ENCODE measurements at regions of chr13 and their contacts with region 1.

Region 1: DNA sequence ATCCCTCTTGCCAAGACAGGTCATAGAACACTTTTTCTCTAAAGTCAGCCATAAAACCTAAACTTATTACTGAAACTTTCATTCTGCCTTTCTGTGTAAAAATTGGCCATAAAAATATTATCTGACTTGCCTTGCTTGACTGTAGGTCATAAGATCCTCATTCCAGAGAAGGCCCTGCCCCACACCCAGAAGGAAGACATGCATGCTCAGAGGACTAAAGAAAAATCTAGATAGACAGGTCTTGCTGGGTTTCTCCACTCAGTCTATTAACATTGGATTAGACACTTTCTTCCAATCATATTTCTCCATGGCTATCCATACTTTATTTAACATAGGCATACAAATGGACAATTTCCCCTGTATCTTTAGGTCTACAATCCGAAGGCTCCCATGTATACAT is 1066.5 kb downstream of the SLITRK1 start:
- DNase-seq: no peak
- H3K4me3 ChIP-seq: no peak overlapping the region
- H3K27ac ChIP-seq: no peak overlapping the region
- H3K4me1 ChIP-seq: no peaks in the 10 kb centered on the region
- H3K27me3 ChIP-seq: no peaks in the 10 kb centered on the region
- CTCF ChIP-seq: no peak
- POLR2A ChIP-seq: no peak

Region 2: DNA sequence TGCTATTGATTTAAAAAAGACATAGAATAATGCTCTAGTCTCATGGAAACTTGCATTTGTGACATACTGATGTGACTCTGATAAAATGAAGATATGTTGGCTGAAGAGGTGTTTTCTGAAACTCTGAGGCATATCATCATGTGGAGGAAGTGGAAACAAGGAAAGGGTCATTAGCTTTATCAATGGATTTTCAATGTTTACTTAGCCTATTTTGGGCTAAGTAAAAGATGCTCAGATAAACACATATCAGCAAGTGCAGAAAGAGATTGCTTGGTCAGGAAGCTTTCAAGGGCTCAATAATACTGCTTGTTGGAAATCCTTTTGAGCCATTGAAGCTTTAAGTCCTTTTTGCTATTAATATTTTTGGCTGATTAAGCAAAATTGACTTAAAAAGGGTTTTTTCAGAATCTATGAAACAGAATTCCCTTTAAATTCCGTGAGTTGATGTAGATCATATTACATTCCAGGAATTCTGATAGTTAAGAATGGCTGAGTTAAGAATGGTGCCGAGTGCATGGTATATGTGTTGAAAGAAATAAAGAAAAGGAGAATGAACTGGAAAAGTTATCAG is 1522.1 kb before region 1 on chr13:
- intact Hi-C with region 1: loop called (anchors 5 kb)
- DNase-seq: no peak
- H3K4me3 ChIP-seq: no peak overlapping the region
- H3K27ac ChIP-seq: no peak overlapping the region
- H3K4me1 ChIP-seq: no peaks in the 10 kb centered on the region
- H3K27me3 ChIP-seq: no peaks in the 10 kb centered on the region
- CTCF ChIP-seq: no peak
- POLR2A ChIP-seq: no peak